GM12878 (cell line): ENCODE measurements at regions of chr19 and their contacts with region 1.

Region 1: GRCh38 chr19:40465557-40466150 is at the start of gene BLVRB:
- DNase-seq: peak; percentile 96
- ATAC-seq: peak; percentile 89
- H3K4me3 ChIP-seq: peak within 1 kb of the TSS; percentile 66
- H3K27ac ChIP-seq: peak within 1 kb of the TSS; percentile 61
- H3K4me1 ChIP-seq: peaks cover 31% of the 10 kb centered on the region
- H3K27me3 ChIP-seq: peaks cover 0 to 2% of the 10 kb centered on the region in 2 experiments; a peak in 3 of 4 replicates
- CTCF ChIP-seq: no peak
- EP300 ChIP-seq: no peak
- POLR2A ChIP-seq: peak; percentile 87
- RAD21 ChIP-seq: no peak
- polyA plus RNA-seq, gene BLVRB: 6.3 to 16.3 TPM

Region 2: DNA sequence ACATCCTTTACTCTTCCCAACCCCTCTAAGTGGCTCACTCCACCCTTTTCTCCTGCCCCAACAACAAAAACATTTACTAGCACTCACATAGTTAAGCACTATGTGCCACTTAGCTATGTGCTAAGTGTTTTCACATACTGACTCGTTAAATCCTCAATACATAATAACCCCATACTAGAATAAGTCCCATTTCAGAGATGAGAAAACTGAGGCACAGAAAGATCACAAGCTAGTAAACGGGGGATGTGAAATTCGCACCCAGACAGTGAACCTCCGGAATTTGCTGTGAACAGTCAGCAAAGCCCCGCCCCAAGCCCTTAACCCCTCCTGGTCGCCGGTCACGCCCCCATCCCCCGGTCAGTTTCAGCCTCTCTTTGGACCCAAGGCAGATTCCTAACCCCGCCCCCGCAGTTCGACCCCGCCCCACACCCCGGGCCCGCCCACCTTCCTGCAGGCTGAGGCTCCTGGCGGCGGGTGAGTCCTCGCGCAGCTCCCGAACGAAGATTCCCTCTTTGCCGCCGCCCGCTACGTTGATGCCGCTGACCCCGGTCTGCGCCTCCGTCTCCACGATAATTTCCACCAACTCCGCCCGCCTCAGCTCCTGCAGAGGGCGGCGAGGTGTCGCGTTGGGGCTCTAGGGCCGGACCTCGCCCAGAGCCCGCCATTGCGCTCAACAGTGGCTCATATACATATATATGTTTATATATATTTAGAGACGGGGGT is 62.2 kb before region 1 on chr19:
- CTCF ChIA-PET with region 1: interaction called, 8 read pairs
- POLR2A ChIA-PET with region 1: interaction called, 10 read pairs
- RAD21 ChIA-PET with region 1: interaction called, 4 read pairs
- SMC1A ChIA-PET with region 1: no interaction called
- in situ Hi-C with region 1: no loop called
- intact Hi-C with region 1: no loop called
- DNase-seq: peak; percentile 69
- ATAC-seq: peak; percentile 96
- H3K4me3 ChIP-seq: peak overlapping the region; percentile 85
- H3K27ac ChIP-seq: peak overlapping the region; percentile 37; the same call in 1 of the 2 replicates
- H3K4me1 ChIP-seq: peaks cover 8% of the 10 kb centered on the region
- H3K27me3 ChIP-seq: no peaks in the 10 kb centered on the region
- CTCF ChIP-seq: no peak
- EP300 ChIP-seq: no peak
- POLR2A ChIP-seq: peak; percentile 44
- RAD21 ChIP-seq: no peak

Region 3: GRCh38 chr19:40444192-40445028 is 21.2 kb before region 1 on chr19 and contains the start of gene SERTAD3:
- CTCF ChIA-PET with region 1: interaction called, 21 read pairs
- POLR2A ChIA-PET with region 1: interaction called, 15 read pairs
- RAD21 ChIA-PET with region 1: interaction called, 19 read pairs
- SMC1A ChIA-PET with region 1: interaction called, 9 read pairs
- in situ Hi-C with region 1: no loop called
- intact Hi-C with region 1: no loop called
- DNase-seq: peak; percentile 76
- ATAC-seq: peak; percentile 88
- H3K4me3 ChIP-seq: peak within 1 kb of the TSS; percentile 88
- H3K27ac ChIP-seq: peak within 1 kb of the TSS; percentile 94
- H3K4me1 ChIP-seq: peaks cover 5% of the 10 kb centered on the region
- H3K27me3 ChIP-seq: no peaks in the 10 kb centered on the region
- CTCF ChIP-seq: peak; percentile 25 to 60 (median 52); a peak in 4 of 6 replicates
- EP300 ChIP-seq: peak in 1 of 2 experiments; percentile 38; a peak in 1 of 4 replicates
- POLR2A ChIP-seq: peak; percentile 97
- RAD21 ChIP-seq: peak; percentile 65
- polyA plus RNA-seq, gene SERTAD3: 4.2 to 8.4 TPM

Region 4: DNA sequence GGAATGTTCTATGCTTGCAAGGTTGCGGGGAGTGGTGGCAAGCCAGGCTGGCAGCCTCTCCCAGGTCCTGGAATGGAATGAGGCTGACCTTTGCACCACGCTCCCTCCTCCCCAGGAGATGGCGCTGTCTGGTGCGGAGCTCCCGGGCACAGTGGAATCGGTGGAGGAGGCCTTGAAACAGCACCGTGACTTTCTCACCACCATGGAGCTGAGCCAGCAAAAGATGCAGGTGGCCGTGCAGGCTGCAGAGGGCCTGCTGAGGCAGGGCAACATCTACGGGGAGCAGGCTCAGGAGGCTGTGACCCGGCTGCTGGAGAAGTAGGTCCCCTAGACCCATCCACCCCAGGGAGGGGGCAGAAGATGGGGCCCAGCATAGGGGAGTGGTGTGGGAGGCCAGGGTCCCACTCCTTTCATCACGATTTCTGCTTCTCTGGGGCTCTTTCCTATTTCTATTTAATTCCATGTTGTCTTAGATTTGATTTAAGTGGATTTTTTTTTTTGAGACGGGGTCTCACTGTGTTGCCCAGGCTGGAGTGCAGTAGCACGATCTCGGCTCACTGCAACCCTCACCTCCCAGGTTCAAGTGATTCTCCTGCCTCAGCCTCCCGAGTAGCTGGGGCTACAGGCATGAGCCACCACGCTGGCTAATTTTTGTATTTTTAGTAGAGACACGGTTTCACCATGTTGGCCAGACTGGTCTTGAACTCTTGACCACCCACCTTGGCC is 57.8 kb after region 1 on chr19:
- CTCF ChIA-PET with region 1: interaction called, 13 read pairs
- POLR2A ChIA-PET with region 1: interaction called, 3 read pairs
- RAD21 ChIA-PET with region 1: interaction called, 9 read pairs
- SMC1A ChIA-PET with region 1: interaction called, 7 read pairs
- in situ Hi-C with region 1: no loop called
- intact Hi-C with region 1: no loop called
- DNase-seq: no peak
- ATAC-seq: peak; percentile 91
- H3K4me3 ChIP-seq: no peak overlapping the region
- H3K27ac ChIP-seq: no peak overlapping the region
- H3K4me1 ChIP-seq: no peaks in the 10 kb centered on the region
- H3K27me3 ChIP-seq: no peaks in the 10 kb centered on the region; a peak in 1 of 4 replicates
- CTCF ChIP-seq: peak; percentile 70 to 72 (median 70)
- EP300 ChIP-seq: no peak
- POLR2A ChIP-seq: no peak
- RAD21 ChIP-seq: peak; percentile 55

Region 5: DNA sequence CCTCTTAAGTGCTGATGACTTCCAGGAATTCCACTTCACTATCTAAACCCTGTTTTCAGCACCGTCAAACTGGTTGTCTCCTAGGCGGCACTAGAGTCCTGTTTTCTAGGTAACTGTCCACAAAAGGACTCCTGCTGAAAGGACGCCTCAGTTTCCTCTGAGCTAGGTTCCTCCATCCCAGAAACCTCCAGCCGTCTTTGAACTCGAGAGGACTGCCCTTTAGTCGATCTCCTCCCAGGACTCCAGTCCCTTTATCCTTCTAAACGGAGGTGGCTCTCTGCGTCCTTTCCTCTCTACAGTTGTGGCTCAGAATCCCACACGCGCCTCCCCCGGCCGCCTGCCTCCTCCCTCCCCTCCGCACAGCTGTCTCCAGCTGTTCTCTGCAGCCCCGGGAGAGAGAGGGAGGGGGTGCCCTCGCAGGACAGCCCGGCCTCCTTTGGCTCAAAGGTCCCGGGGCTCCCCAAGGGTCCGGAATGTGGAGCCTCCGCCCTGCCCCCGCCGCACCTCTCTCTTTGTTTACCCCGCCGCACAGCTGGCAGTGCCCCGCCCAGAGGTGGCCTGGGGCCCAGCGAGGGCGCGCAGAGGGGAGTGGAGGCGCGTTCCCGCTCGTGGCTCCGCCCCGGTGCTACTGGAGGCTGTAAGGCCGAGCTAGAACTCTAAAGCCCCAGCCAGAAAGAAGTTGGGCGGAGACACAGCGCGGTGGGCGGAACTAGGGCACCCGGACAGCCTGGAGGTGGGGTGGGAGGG is 137.9 kb after region 1 on chr19:
- CTCF ChIA-PET with region 1: interaction called, 21 read pairs
- POLR2A ChIA-PET with region 1: no interaction called
- RAD21 ChIA-PET with region 1: interaction called, 4 read pairs
- SMC1A ChIA-PET with region 1: interaction called, 6 read pairs
- in situ Hi-C with region 1: no loop called
- intact Hi-C with region 1: loop called (anchors 2 kb)
- DNase-seq: peak; percentile 88
- ATAC-seq: peak; percentile 86
- H3K4me3 ChIP-seq: peak overlapping the region; percentile 56
- H3K27ac ChIP-seq: no peak overlapping the region
- H3K4me1 ChIP-seq: peaks cover 19% of the 10 kb centered on the region
- H3K27me3 ChIP-seq: peaks cover 8% of the 10 kb centered on the region in 2 experiments
- CTCF ChIP-seq: no peak
- EP300 ChIP-seq: no peak
- POLR2A ChIP-seq: peak; percentile 37; the same call in 1 of the 2 replicates
- RAD21 ChIP-seq: no peak

Region 6: DNA sequence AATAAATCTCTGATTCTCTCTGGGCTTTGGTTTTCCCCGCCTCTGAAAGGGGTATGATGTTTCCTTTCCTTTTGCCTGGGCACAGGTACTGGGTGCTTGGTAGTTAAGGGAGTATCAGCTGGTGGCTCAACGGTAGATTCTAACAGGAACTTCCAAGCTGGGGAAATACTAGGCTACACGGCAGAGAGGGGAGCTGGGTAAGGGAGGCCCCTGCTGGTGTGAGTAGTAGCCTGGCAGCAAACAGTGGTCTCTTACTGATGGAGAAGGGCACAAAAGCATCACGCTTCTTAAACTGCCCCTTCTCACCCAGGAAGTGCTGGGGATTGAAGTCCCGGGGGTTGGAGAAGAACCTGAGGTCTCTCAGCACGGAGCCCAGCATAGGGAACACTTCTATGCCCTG is 443.3 kb after region 1 on chr19:
- CTCF ChIA-PET with region 1: no interaction called
- POLR2A ChIA-PET with region 1: no interaction called
- RAD21 ChIA-PET with region 1: no interaction called
- SMC1A ChIA-PET with region 1: no interaction called
- in situ Hi-C with region 1: no loop called
- intact Hi-C with region 1: no loop called
- DNase-seq: no peak
- ATAC-seq: peak; percentile 63
- H3K4me3 ChIP-seq: no peak overlapping the region
- H3K27ac ChIP-seq: no peak overlapping the region
- H3K4me1 ChIP-seq: no peaks in the 10 kb centered on the region
- H3K27me3 ChIP-seq: no peaks in the 10 kb centered on the region; a peak in 2 of 4 replicates
- CTCF ChIP-seq: peak; percentile 31 to 40 (median 37); a peak in 4 of 6 replicates
- EP300 ChIP-seq: no peak
- POLR2A ChIP-seq: no peak
- RAD21 ChIP-seq: 0 out of 2 replicates have a peak, but pooled peaks have one; percentile 28